ENCODE measurements at regions of chr20 and their contacts with region 1.

Region 1: GRCh38 chr20:2451939-2452732 is 18.5 kb downstream of the SNRPB start:
- DNase-seq: peak; percentile 55
- ATAC-seq: peak; percentile 74

Region 2: DNA sequence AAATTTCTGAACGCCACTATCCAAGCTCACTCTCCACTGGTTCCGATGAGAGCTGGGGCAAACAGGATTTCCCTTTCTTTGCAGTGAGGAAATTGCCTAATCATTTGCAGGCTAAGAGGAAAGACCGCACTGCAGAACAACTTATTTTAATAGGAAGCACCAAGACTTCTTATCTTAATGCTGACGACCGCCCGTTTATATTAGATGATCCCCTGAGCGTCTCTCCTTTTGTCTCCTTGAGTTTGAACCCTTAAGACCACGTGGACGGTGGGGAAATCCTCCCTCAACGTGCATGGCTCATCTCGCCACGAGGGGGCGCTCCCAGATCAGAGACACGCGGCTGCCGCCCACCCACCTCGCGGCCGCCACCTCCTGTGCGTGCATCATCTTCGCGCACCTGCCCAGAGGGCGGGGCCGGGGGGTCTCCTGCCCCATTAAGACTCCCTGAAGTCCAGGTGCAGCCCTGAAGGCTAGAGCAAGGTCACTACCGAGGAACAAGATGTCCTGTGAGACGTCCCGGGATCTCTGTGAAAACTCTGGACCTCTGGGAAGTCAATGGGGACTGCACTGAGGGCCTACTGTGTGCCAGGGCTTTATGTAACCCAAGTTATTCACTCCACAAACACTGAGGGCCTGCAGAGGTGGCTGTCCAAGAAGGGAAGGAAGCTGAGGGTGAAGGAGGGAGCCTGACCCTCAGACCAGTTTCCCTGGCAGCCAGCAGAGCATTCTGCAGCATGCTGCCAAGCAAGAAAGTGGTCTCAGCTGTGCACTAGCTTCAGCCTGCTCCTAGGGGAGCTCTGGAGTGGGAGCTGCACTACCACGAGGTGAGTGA is 486.4 kb before region 1 on chr20:
- intact Hi-C with region 1: loop called (anchors 10 kb)
- DNase-seq: peak; percentile 85
- ATAC-seq: peak; percentile 90

Region 3: DNA sequence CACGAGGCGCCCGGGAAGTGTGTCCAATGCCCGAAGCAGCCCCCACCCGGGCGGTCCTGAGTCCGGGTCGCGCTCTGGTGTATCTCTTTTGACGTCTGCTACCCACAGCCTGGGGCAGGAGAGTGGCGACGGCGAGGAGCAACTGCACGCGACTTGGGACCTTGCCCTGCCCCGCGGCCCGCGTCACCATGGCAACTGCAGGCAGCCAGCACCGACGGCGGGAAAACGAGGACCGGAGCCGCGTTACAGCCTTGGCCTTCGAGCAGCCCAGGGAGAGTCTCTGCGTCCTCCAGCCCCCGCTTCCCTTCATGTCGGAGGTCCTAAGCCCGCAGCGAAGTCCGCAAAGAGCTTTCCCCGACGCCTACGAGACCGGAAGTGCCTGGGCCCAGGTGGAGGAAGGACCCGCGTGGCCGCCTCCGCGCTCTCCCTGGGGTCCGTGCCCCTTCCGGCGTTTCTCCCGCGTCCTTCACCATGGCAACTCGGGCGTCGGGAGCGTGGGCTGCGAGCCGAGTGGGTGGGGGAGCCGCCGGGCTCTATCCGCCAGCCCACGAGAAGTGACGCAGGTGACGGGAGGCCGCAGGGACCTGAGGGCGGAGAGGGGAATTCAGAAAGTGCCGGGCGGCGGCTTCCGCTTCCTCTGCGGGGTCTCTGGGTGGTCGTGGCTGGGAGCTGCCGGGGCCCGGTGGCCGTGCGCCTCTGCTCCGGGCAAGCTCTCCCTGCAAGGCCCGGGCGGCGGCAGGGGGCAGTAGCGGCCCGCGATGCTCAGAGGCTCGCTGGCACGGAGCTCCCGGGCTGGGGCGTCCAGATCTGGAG is 245.0 kb before region 1 on chr20:
- intact Hi-C with region 1: loop called (anchors 10 kb)
- DNase-seq: peak; percentile 85
- ATAC-seq: peak; percentile 89

Region 4: DNA sequence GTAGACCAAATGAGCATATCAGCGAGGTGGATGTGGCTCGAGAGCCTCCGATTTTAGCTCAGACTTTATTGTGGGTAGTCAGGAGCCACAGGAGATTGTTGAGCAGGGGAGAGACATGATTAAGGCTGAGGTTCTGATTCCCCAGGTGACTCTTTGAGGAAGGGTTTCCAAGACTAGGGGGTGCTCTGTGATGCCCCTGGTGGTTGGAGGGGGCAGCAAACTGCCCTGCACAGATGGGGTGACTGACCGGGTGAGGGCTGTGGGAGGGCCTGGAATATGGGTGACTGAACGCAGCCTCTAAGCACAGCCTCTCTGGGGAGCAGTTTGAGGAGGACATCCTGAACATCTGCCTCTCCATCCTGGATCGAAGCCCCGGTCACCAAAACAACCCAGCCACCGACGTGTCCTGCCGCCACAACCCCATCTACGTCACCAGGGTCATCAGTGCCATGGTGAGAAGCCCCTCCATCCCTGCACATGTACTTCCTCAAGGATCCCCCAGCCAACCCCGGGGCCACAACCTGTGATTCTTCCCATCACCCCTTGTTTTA is 54.5 kb before region 1 on chr20:
- intact Hi-C with region 1: no loop called
- DNase-seq: no peak
- ATAC-seq: no peak

Region 5: DNA sequence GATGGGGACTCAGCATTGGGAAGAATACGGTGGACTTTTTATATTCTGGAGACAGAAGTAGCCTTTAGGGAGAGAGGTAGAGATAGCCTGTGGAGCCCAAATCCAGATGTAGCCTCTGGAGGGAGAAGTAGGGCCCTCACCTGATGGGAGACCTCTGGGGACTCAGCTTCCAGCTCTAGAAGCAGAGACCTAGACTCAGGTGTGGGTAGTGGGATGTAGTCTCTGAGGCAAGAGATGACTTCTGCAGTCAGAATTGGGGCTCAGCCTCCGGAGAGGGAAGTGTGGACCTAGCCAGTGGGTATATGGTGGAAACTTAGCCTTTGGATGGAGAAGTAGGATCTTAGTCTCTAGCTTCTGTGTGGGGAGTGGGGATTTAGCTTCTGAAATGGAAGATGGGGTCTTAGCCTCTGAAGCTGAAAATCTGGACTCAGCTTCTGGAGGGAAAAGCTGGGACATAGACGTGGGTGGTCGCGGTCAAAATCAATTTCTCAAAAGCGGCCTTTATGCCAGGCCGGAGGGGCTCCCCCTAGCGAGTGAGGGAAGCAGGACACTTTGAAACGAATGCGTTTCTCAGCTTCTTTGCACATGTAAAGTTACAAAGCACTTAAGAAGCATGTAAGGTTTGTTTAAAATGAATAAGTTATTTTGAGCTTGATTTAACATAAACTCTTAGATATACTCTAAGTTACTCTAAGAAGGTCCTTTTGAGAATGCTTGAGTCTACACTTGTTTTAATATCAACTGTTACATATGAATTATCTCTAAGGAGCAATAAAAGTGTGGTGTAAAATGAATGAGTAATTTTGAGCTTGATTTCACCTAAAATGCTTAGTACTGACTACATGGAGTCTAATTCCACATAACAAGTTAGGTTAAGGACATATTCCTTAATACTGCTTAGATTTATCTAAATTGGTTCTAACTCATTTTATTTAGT is 69.5 kb after region 1 on chr20:
- intact Hi-C with region 1: no loop called
- DNase-seq: peak; percentile 50
- ATAC-seq: no peak